ENCODE measurements at regions of chr1 and their contacts with region 1.

Region 1: DNA sequence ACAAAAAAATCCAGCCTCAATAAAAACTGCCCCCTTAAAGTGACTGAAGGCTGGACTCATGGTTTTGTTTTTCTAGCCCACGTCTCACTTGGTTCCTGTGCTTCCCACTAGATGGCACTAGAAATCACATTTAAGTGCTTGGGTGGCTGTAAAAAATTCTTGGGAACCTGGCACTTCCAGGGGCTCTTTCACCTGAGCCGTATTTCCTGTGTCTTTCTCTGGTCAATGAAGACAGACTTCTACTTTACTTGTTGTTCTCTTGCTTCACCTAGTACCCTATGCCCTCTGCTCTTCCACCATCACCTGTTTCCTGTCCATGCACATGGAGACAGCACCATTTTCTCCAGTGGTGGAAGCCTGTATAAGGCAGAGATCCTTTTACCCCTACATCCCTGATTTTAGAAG is 20.0 kb downstream of the METTL13 start:
- DNase-seq: peak; percentile 35
- ATAC-seq: peak; percentile 76
- H3K4me3 Mint-ChIP-seq: no peak overlapping the region
- H3K27ac Mint-ChIP-seq: peak overlapping the region; percentile 77; the same call in 1 of the 2 replicates
- H3K4me1 Mint-ChIP-seq: peaks cover 25% of the 10 kb centered on the region
- H3K27me3 Mint-ChIP-seq: no peaks in the 10 kb centered on the region
- CTCF ChIP-seq: peak; percentile 52; the same call in 1 of the 2 replicates

Region 2: DNA sequence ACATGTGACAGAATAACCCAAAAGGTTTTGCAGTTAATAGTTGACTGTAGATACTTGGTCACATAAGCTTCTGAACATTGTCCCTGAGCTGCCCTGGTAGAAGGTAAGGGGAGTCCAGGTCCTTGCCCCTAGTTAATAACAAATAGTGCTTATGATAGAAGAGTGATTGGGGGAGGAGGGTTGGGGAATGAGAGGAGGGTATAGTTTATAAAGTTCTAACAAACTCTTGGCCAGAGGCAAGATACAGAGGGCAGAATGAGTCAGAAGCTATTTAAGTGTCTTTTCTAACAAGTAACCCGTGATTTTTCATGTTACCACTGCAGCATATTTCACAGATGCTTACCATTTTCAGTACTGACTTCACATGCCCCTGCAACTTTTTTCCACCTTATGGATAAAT is 206.2 kb before region 1 on chr1:
- CTCF ChIA-PET with region 1: no interaction called
- POLR2A ChIA-PET with region 1: no interaction called
- DNase-seq: no peak
- ATAC-seq: no peak
- H3K4me3 Mint-ChIP-seq: no peak overlapping the region
- H3K27ac Mint-ChIP-seq: no peak overlapping the region
- H3K4me1 Mint-ChIP-seq: peaks cover 7% of the 10 kb centered on the region
- H3K27me3 Mint-ChIP-seq: no peaks in the 10 kb centered on the region
- CTCF ChIP-seq: no peak

Region 3: DNA sequence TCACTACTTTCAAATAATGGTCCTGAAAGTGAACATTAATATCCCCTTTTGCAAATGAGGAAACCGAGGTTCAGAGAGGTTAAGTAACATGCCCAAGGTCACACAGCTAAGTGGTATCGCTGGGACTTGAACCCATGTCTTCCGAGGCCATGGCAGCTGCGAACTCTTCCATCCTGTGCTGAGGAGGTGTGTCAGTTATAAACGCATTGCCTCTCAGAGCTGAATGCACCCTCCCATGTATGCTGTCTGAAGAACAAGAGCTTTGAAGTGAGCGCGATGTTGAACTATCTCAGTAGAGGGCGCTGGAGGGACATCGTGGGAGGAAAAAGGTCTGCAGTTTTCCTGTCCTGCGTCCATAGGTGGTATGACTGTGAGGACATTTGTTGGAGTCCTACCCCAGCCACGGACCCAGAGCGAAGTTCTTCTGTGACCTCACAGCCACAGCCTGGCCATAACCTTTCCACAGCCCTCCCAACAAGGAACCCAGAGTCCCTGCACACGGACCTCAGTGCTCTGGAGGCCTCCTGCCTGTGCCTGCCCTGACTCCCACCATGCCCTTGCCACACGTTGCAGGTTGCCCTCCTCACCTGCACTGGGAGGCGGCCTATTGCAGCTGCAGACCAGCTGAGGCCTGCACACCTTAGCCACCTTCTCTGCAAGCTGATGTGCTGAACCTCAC is 156.5 kb before region 1 on chr1:
- CTCF ChIA-PET with region 1: interaction called, 44 read pairs
- POLR2A ChIA-PET with region 1: interaction called, 3 read pairs
- DNase-seq: peak; percentile 91
- ATAC-seq: peak; percentile 74
- H3K4me3 Mint-ChIP-seq: peak overlapping the region; percentile 32; the same call in 1 of the 2 replicates
- H3K27ac Mint-ChIP-seq: no peak overlapping the region
- H3K4me1 Mint-ChIP-seq: peaks cover 39% of the 10 kb centered on the region
- H3K27me3 Mint-ChIP-seq: no peaks in the 10 kb centered on the region
- CTCF ChIP-seq: peak; percentile 62

Region 4: DNA sequence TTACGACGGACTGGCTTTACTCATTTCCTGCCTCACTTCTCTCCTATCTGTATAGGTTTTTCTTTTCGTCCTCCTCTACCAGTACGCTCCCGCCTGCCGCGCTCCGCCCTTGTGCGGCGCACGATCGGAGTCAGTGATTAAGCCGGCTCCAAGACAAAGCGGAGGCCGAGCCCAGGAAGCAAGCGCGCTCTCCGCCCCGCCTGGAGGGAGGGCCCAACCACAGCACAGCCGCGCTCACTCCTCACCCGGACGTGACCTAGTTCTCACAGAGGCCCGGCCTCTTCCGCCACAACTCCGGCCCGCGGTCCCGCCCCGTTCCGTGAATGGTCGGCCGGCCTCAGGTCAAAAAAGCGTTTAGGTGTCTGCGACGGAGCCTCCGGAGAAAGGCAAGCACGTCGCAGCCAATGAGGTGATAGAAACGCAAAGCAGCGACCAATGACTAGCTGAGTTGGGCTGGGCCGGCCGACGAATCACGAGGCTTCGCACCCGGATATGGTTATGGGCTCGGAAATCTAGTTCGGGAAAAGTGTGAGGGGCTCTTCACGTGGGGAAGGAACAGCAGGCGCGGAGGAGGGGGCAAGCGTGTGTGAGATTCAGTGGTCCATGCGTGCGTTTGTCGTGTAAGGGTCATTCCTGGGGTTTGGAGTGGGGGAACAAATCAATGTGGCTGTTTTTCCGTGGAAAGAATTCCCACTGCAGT is 20.2 kb before region 1 on chr1 and contains the start of gene METTL13:
- CTCF ChIA-PET with region 1: interaction called, 11 read pairs
- POLR2A ChIA-PET with region 1: interaction called, 3 read pairs
- DNase-seq: peak; percentile 98
- ATAC-seq: peak; percentile 98
- H3K4me3 Mint-ChIP-seq: peak within 1 kb of the TSS; percentile 94
- H3K27ac Mint-ChIP-seq: peak within 1 kb of the TSS; percentile 98
- H3K4me1 Mint-ChIP-seq: peaks cover 12% of the 10 kb centered on the region
- H3K27me3 Mint-ChIP-seq: no peaks in the 10 kb centered on the region
- CTCF ChIP-seq: no peak
- total RNA-seq, gene METTL13: 40.4 to 46.5 TPM (median 43.6 TPM) in 3 replicates

Region 5: GRCh38 chr1:171817511-171818265 is 16.2 kb after region 1 on chr1:
- CTCF ChIA-PET with region 1: interaction called, 19 read pairs
- POLR2A ChIA-PET with region 1: no interaction called
- DNase-seq: no peak
- ATAC-seq: peak; percentile 79
- H3K4me3 Mint-ChIP-seq: no peak overlapping the region
- H3K27ac Mint-ChIP-seq: peak overlapping the region; percentile 54
- H3K4me1 Mint-ChIP-seq: peaks cover 30% of the 10 kb centered on the region
- H3K27me3 Mint-ChIP-seq: no peaks in the 10 kb centered on the region
- CTCF ChIP-seq: no peak

Region 6: GRCh38 chr1:171858696-171859095 is 57.2 kb after region 1 on chr1:
- CTCF ChIA-PET with region 1: no interaction called
- POLR2A ChIA-PET with region 1: no interaction called
- DNase-seq: no peak
- ATAC-seq: no peak
- H3K4me3 Mint-ChIP-seq: no peak overlapping the region
- H3K27ac Mint-ChIP-seq: no peak overlapping the region
- H3K4me1 Mint-ChIP-seq: no peaks in the 10 kb centered on the region
- H3K27me3 Mint-ChIP-seq: no peaks in the 10 kb centered on the region
- CTCF ChIP-seq: no peak

Region 7: DNA sequence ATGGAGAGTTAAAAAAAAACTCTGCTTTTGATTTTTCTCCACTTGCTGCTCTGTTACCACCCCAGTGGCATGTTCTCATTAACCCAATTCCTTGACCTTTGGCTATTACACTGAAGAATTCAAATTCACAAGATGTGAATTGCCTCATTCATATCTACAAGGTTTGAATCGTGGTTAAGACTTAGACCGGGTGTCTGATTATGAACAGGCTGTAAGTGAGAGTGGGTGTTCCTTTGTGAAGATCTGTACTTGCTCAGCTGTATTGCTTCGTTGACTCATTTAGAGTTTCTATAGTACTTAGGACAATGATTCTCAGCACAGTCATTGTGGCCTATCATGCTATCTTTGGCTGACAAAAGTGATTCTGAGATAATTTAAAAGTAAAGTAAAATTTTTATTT is 76.2 kb after region 1 on chr1:
- CTCF ChIA-PET with region 1: no interaction called
- POLR2A ChIA-PET with region 1: no interaction called
- DNase-seq: no peak
- ATAC-seq: no peak
- H3K4me3 Mint-ChIP-seq: no peak overlapping the region
- H3K27ac Mint-ChIP-seq: no peak overlapping the region
- H3K4me1 Mint-ChIP-seq: peaks cover 8% of the 10 kb centered on the region
- H3K27me3 Mint-ChIP-seq: no peaks in the 10 kb centered on the region
- CTCF ChIP-seq: no peak

Region 8: GRCh38 chr1:171929121-171929520 is 127.6 kb after region 1 on chr1:
- CTCF ChIA-PET with region 1: interaction called, 17 read pairs
- POLR2A ChIA-PET with region 1: no interaction called
- DNase-seq: no peak
- ATAC-seq: peak; percentile 60
- H3K4me3 Mint-ChIP-seq: no peak overlapping the region
- H3K27ac Mint-ChIP-seq: no peak overlapping the region
- H3K4me1 Mint-ChIP-seq: peaks cover 14% of the 10 kb centered on the region; the same call in 1 of the 2 replicates
- H3K27me3 Mint-ChIP-seq: no peaks in the 10 kb centered on the region; the same call in 1 of the 2 replicates
- CTCF ChIP-seq: no peak; the same call in 1 of the 2 replicates

Region 9: DNA sequence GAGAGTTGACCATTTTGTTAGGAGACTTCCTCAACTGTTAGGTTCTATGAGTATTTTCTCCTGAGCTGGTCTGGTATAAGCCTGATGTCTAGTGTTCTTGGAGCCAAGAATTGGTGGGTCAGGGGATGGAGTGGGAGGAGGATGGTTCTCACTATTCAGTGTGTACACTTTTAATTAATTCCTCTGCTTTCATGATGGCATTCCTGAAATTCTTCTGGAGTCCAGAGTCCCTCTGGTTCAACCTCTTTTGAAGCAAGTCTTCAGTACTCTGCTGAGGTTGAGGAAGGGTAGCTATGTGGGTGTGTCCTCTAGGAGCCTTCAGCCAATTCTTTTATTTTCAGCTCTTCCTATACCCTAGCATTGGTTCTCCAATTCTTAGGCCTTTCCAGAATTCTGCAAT is 188.9 kb after region 1 on chr1:
- CTCF ChIA-PET with region 1: interaction called, 277 read pairs
- POLR2A ChIA-PET with region 1: interaction called, 4 read pairs
- DNase-seq: no peak
- ATAC-seq: no peak
- H3K4me3 Mint-ChIP-seq: no peak overlapping the region
- H3K27ac Mint-ChIP-seq: no peak overlapping the region
- H3K4me1 Mint-ChIP-seq: peaks cover 14% of the 10 kb centered on the region
- H3K27me3 Mint-ChIP-seq: no peaks in the 10 kb centered on the region
- CTCF ChIP-seq: no peak

Measured in WTC11 (cell line).